ENCODE measurements at regions of chr19 and their contacts with region 1.

Region 1: GRCh38 chr19:50461066-50461875 is 15.0 kb upstream of the EMC10 start:
- DNase-seq: peak; percentile 53
- ATAC-seq: peak; percentile 86
- H3K4me3 ChIP-seq: no peak overlapping the region
- H3K27ac ChIP-seq: peak overlapping the region; percentile 73; the same call in 1 of the 2 replicates
- H3K4me1 ChIP-seq: peaks cover 20% of the 10 kb centered on the region
- H3K27me3 ChIP-seq: no peaks in the 10 kb centered on the region
- CTCF ChIP-seq: peak; percentile 92 to 95 (median 92)
- EP300 ChIP-seq: no peak
- POLR2A ChIP-seq: no peak
- RAD21 ChIP-seq: peak; percentile 92

Region 2: GRCh38 chr19:50362656-50363424 is 98.4 kb before region 1 on chr19:
- CTCF ChIA-PET with region 1: interaction called, 167 read pairs
- POLR2A ChIA-PET with region 1: interaction called, 35 read pairs
- RAD21 ChIA-PET with region 1: interaction called, 72 read pairs
- SMC1A ChIA-PET with region 1: interaction called, 68 read pairs
- in situ Hi-C with region 1: loop called (anchors 5 kb)
- intact Hi-C with region 1: loop called (anchors 1 kb)
- DNase-seq: no peak
- ATAC-seq: no peak
- H3K4me3 ChIP-seq: no peak overlapping the region
- H3K27ac ChIP-seq: no peak overlapping the region
- H3K4me1 ChIP-seq: peaks cover 64% of the 10 kb centered on the region
- H3K27me3 ChIP-seq: no peaks in the 10 kb centered on the region
- CTCF ChIP-seq: no peak
- EP300 ChIP-seq: no peak
- POLR2A ChIP-seq: no peak
- RAD21 ChIP-seq: no peak

Region 3: DNA sequence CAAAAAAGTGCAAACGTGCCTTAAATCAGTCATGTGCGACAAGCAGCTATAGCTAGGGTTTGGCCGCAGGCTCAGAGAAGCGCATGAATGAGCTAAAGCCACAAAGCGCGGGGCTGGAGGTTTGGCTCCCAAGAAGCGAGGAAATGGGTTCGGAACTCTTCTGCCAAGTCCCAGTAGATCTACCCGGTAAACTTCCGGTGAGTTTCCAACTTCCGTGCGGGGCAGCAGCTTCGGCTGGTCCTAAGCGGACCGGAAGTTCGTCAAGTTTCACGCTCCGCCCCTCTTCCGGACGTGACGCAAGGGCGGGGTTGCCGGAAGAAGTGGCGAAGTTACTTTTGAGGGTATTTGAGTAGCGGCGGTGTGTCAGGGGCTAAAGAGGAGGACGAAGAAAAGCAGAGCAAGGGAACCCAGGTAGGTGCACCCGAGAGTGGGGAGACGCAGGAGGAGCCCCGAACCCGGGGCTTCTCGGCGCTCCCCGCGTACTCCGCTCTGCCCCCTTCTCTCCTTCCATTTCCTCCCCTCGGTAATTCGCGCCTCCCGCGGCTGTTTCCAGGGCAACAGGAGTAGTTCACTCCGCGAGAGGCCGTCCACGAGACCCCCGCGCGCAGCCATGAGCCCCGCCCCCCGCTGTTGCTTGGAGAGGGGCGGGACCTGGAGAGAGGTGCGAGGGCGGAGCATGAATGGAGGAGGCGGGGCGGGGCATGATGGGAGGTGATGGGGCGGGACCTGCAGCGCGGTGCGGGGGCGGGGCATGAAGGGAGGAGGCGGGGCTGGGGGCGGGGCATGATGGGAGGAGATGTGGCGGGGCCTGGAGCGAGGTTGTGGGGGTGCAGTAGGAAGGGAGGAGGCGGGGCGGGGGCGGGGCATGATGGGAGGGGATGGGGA is 84.9 kb before region 1 on chr19 and contains the start of gene NR1H2:
- CTCF ChIA-PET with region 1: interaction called, 11 read pairs
- POLR2A ChIA-PET with region 1: interaction called, 3 read pairs
- RAD21 ChIA-PET with region 1: interaction called, 7 read pairs
- SMC1A ChIA-PET with region 1: interaction called, 16 read pairs
- in situ Hi-C with region 1: no loop called
- intact Hi-C with region 1: no loop called
- DNase-seq: peak; percentile 90
- ATAC-seq: peak; percentile 95
- H3K4me3 ChIP-seq: peak within 1 kb of the TSS; percentile 79
- H3K27ac ChIP-seq: peak within 1 kb of the TSS; percentile 94
- H3K4me1 ChIP-seq: peaks cover 7% of the 10 kb centered on the region; the same call in 1 of the 2 replicates
- H3K27me3 ChIP-seq: no peaks in the 10 kb centered on the region
- CTCF ChIP-seq: no peak
- EP300 ChIP-seq: peak; percentile 9 to 33; a peak in 2 of 4 replicates
- POLR2A ChIP-seq: peak; percentile 77
- RAD21 ChIP-seq: no peak
- polyA plus RNA-seq, gene NR1H2: 0.05 to 1.3 TPM

Region 4: GRCh38 chr19:50431343-50432220 is 29.7 kb before region 1 on chr19:
- CTCF ChIA-PET with region 1: interaction called, 9 read pairs
- POLR2A ChIA-PET with region 1: interaction called, 3 read pairs
- RAD21 ChIA-PET with region 1: interaction called, 3 read pairs
- SMC1A ChIA-PET with region 1: interaction called, 5 read pairs
- in situ Hi-C with region 1: no loop called
- intact Hi-C with region 1: loop called (anchors 2 kb)
- DNase-seq: peak; percentile 61
- ATAC-seq: peak; percentile 86
- H3K4me3 ChIP-seq: peak overlapping the region; percentile 57; the same call in 1 of the 2 replicates
- H3K27ac ChIP-seq: peak overlapping the region; percentile 82
- H3K4me1 ChIP-seq: peaks cover 58% of the 10 kb centered on the region
- H3K27me3 ChIP-seq: peaks cover 0 to under 1% of the 10 kb centered on the region in 2 experiments; a peak in 1 of 4 replicates
- CTCF ChIP-seq: no peak
- EP300 ChIP-seq: 0 out of 4 replicates have a peak, but pooled peaks of 1 of the 2 experiments have one; percentile 23
- POLR2A ChIP-seq: peak; percentile 71
- RAD21 ChIP-seq: no peak

Region 5: GRCh38 chr19:50497022-50497405 is 35.7 kb after region 1 on chr19:
- CTCF ChIA-PET with region 1: no interaction called
- POLR2A ChIA-PET with region 1: no interaction called
- RAD21 ChIA-PET with region 1: no interaction called
- SMC1A ChIA-PET with region 1: no interaction called
- in situ Hi-C with region 1: no loop called
- intact Hi-C with region 1: no loop called
- DNase-seq: no peak
- ATAC-seq: no peak
- H3K4me3 ChIP-seq: no peak overlapping the region
- H3K27ac ChIP-seq: no peak overlapping the region
- H3K4me1 ChIP-seq: no peaks in the 10 kb centered on the region
- H3K27me3 ChIP-seq: no peaks in the 10 kb centered on the region
- CTCF ChIP-seq: no peak
- EP300 ChIP-seq: no peak
- POLR2A ChIP-seq: no peak
- RAD21 ChIP-seq: no peak

Measured in GM12878 (cell line).